HEK293 (cell line): ENCODE measurements at regions of chr17 and their contacts with region 1.

Region 1: DNA sequence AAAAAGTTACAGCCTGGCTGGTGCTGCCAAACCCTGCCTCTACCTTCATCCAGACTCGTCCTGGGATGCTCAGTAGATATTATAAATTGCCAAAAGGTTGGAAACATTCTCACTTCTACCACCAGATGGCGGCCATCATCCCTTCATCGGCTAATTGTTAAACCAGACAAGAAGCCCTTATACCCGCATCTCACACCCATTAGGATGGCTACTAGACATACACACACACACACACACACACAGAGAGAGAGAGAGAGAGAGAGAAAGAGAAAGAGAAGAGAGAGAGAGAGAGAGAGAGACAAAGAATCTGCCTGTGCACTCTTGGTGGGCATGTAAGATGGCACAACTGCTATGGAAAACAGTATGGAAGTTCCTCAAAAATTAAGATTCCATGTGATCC is 15.0 kb upstream of the SCIMP start:
- H3K4me3 ChIP-seq: no peak overlapping the region
- H3K27ac ChIP-seq: no peak overlapping the region
- H3K4me1 ChIP-seq: no peaks in the 10 kb centered on the region
- CTCF ChIP-seq: peak; percentile 53; the same call in 1 of the 2 replicates

Region 2: GRCh38 chr17:5155495-5155894 is 94.1 kb before region 1 on chr17:
- CTCF ChIA-PET with region 1: no interaction called
- POLR2A ChIA-PET with region 1: no interaction called
- H3K4me3 ChIP-seq: no peak overlapping the region
- H3K27ac ChIP-seq: no peak overlapping the region
- H3K4me1 ChIP-seq: no peaks in the 10 kb centered on the region
- CTCF ChIP-seq: no peak

Region 3: GRCh38 chr17:5237541-5238016 is 12.0 kb before region 1 on chr17:
- CTCF ChIA-PET with region 1: interaction called, 19 read pairs
- POLR2A ChIA-PET with region 1: no interaction called
- H3K4me3 ChIP-seq: no peak overlapping the region
- H3K27ac ChIP-seq: no peak overlapping the region
- H3K4me1 ChIP-seq: no peaks in the 10 kb centered on the region
- CTCF ChIP-seq: peak; percentile 31; the same call in 1 of the 2 replicates

Region 4: DNA sequence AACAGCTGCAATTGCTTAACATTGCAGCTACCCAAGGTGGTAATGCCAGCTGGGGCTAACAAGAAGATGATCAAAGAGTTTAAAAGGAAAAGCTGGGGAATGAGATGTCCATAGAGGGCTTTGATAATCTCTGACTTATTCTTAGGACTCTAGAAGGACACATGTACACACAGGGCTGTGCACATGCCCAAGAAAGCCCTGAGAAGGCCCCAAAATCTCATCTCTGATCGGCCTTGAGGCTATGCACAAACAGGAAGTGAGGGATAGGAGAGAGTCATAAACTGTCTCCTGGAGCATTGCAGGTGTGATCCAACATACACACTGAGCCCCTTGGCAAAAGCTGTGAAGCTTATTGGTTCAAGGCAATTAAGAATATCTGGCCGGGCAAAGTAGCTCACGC is 15.3 kb after region 1 on chr17:
- CTCF ChIA-PET with region 1: interaction called, 10 read pairs
- POLR2A ChIA-PET with region 1: no interaction called
- H3K4me3 ChIP-seq: no peak overlapping the region
- H3K27ac ChIP-seq: no peak overlapping the region
- H3K4me1 ChIP-seq: no peaks in the 10 kb centered on the region
- CTCF ChIP-seq: no peak

Region 5: DNA sequence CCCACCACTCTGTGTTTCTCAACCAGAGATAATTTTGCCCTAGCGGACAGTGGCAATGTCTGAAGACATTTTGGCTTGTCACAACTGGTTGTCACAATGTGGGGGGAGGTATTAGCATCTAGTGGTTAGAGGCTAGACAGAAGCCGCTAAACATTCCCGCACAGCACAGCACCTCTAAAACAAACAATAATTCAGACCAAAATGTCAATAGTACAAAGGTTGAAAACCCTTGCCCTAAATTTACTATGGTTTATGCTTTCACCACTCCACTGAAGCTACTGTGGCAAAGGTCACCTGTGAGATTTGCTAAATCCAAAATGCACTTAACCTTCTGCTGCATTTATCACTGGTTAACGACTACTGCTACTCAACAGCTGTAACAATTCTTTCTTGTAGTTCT is 155.8 kb after region 1 on chr17:
- CTCF ChIA-PET with region 1: interaction called, 11 read pairs
- POLR2A ChIA-PET with region 1: no interaction called
- H3K4me3 ChIP-seq: no peak overlapping the region
- H3K27ac ChIP-seq: no peak overlapping the region
- H3K4me1 ChIP-seq: no peaks in the 10 kb centered on the region
- CTCF ChIP-seq: no peak